Transverse colon (tissue), 4 donors: ENCODE measurements at regions of chr18 and their contacts with region 1.

Region 1: DNA sequence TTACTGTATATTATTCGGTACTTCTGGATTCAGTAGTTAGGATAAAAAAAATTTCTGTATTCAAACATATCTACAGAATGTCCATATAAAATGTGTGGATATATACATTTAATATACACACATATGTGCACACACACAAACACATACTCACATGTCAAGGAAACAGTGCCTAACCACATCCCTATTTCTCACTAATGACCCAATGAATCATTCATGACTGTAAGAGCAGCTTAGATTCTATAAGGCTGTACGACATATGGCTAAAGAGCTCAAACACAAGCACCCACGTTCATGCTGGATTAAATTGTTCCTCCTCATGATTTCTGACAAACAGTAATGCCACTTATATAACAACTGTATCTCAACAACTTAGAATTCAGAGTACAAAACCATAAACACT is 457.3 kb downstream of the ADCYAP1 start:
- DNase-seq: no peak
- H3K4me3 ChIP-seq: no peak overlapping the region
- H3K27ac ChIP-seq: no peak overlapping the region
- H3K4me1 ChIP-seq: no peaks in the 10 kb centered on the region
- H3K27me3 ChIP-seq: no peaks in the 10 kb centered on the region
- CTCF ChIP-seq: no peak
- EP300 ChIP-seq: no peak
- POLR2A ChIP-seq: no peak

Region 2: DNA sequence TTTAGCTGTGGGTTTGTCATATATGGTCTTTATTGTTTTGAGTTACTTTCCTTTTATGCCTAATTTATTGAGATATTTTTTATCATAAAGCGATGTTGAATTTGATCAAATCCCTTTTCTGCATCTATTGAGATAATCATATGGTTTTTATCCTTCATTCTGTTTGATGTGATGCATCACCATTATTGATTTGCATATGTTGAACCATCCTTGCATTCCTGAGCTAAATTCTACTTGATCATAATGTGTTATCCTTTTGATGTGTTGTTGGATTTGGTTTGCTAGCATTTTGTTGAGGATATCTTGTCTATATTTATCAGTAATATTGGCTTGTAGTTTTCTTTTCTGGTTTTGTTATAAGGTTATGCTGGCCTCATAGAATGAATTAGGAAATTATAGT is 148.8 kb before region 1 on chr18:
- in situ Hi-C with region 1: loop called in 1 of 4 experiments (anchors 25 kb)
- intact Hi-C with region 1: no loop called
- DNase-seq: no peak
- H3K4me3 ChIP-seq: no peak overlapping the region
- H3K27ac ChIP-seq: no peak overlapping the region
- H3K4me1 ChIP-seq: no peaks in the 10 kb centered on the region
- H3K27me3 ChIP-seq: no peaks in the 10 kb centered on the region
- CTCF ChIP-seq: no peak
- EP300 ChIP-seq: no peak
- POLR2A ChIP-seq: no peak

Region 3: DNA sequence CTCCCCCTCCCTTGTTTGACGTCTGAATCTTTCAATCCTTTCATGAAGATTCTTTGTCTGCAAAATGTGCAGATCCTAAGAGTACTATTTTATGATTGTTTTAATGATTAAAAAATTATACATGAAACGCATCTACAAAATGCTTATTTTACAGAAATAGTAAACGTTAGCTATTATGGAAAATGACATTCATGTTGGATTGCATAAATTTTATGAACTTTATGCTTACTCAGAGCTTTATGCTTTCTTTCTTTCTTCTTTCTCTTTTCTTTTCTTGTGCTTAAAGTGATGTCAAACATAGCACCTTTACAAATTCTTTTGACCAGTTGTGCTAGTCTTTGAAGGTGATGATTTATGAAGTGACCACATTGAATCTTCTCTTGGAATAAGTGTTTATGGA is 348.2 kb after region 1 on chr18:
- in situ Hi-C with region 1: no loop called
- intact Hi-C with region 1: loop called (anchors 5 kb)
- DNase-seq: no peak
- H3K4me3 ChIP-seq: no peak overlapping the region
- H3K27ac ChIP-seq: no peak overlapping the region
- H3K4me1 ChIP-seq: no peaks in the 10 kb centered on the region
- H3K27me3 ChIP-seq: no peaks in the 10 kb centered on the region
- CTCF ChIP-seq: no peak
- EP300 ChIP-seq: no peak
- POLR2A ChIP-seq: no peak

Region 4: DNA sequence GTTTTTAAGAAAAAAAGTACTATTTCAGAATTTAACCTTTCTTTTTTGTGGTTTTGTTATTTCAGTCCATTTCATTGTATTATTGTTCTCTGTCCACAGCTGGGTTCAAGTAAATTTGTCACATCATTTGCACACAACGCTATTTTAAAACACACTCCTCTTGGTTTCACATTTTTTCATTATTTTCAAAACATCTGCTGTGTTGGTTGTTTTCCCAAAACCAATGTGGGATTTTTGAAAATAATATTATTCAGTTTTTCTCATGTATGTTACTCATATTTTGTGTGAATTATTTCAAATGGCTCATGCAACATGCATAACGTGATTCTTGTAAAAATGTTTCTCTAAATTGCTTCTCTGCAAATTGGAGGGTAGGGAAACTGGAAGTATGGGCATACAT is 620.1 kb after region 1 on chr18:
- in situ Hi-C with region 1: no loop called
- intact Hi-C with region 1: no loop called
- DNase-seq: no peak
- H3K4me3 ChIP-seq: no peak overlapping the region
- H3K27ac ChIP-seq: no peak overlapping the region
- H3K4me1 ChIP-seq: no peaks in the 10 kb centered on the region
- H3K27me3 ChIP-seq: no peaks in the 10 kb centered on the region
- CTCF ChIP-seq: no peak
- EP300 ChIP-seq: no peak
- POLR2A ChIP-seq: no peak